ENCODE measurements at regions of chr21 and their contacts with region 1.

Region 1: DNA sequence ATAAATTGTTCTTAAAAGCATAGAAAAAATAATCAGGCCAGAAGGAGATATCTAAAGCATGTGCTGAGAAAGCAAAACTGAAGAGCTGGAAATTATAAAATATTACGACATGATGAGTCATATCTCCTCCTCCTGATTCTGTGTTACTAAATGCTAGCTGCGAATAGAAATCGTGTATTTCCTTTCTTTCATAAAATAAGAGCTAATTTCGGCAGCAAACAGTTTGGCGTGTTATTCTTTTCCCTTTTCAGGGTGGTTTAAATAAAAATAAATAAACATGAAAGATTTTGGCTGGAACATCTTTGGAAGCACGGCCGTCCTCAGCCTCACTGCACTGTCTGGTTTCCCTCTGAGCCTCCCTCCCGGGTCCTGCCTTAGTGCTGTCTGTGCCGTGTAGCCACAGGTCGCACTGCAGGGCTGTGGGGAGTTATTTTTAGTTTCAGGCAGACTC is 56.0 kb downstream of the ADARB1 start:
- DNase-seq: no peak
- ATAC-seq: no peak
- H3K4me3 ChIP-seq: 0 out of 4 replicates have a peak overlapping the region, but pooled peaks of 1 of the 2 experiments have one; percentile 4
- H3K27ac ChIP-seq: no peak overlapping the region
- H3K4me1 ChIP-seq: peaks cover 15 to 19% of the 10 kb centered on the region in 2 experiments
- H3K27me3 ChIP-seq: no peaks in the 10 kb centered on the region
- CTCF ChIP-seq: no peak
- POLR2A ChIP-seq: no peak
- RAD21 ChIP-seq: no peak

Region 2: GRCh38 chr21:44892536-44893277 is 237.6 kb before region 1 on chr21:
- CTCF ChIA-PET with region 1: interaction called, 22 read pairs
- POLR2A ChIA-PET with region 1: no interaction called
- RAD21 ChIA-PET with region 1: no interaction called
- intact Hi-C with region 1: no loop called
- DNase-seq: peak; percentile 26
- ATAC-seq: peak; percentile 89
- H3K4me3 ChIP-seq: no peak overlapping the region
- H3K27ac ChIP-seq: no peak overlapping the region
- H3K4me1 ChIP-seq: no peaks in the 10 kb centered on the region; a peak in 1 of 4 replicates
- H3K27me3 ChIP-seq: no peaks in the 10 kb centered on the region
- CTCF ChIP-seq: peak; percentile 76 to 94 (median 90)
- POLR2A ChIP-seq: no peak
- RAD21 ChIP-seq: peak; percentile 77

Region 3: DNA sequence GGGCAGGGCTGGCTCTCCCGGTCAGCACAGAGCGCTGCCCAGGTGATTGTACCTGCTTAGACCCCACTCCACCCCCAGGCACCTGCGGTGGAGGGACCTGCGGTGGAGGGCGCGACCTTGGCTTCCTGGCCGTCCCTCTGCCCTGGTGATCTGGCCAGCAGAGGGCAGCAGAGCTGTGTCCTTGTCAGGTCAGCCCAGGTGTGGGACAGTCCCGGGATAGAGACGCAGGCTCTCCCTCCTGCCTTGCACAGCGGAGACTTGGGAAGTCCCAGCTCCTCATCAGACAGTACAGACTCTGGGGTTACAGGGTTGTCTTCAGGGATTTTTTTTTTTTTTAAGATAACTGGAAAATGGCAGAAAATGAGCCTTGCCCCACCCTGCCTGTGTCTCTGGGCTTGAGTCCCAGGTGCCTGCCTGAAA is 180.6 kb before region 1 on chr21:
- CTCF ChIA-PET with region 1: interaction called, 42 read pairs
- POLR2A ChIA-PET with region 1: interaction called, 3 read pairs
- RAD21 ChIA-PET with region 1: interaction called, 4 to 8 read pairs
- intact Hi-C with region 1: loop called (anchors 1 kb)
- DNase-seq: peak; percentile 42
- ATAC-seq: peak; percentile 93
- H3K4me3 ChIP-seq: no peak overlapping the region
- H3K27ac ChIP-seq: no peak overlapping the region
- H3K4me1 ChIP-seq: no peaks in the 10 kb centered on the region; a peak in 1 of 4 replicates
- H3K27me3 ChIP-seq: no peaks in the 10 kb centered on the region
- CTCF ChIP-seq: peak; percentile 86 to 90 (median 89)
- POLR2A ChIP-seq: no peak
- RAD21 ChIP-seq: peak; percentile 86

Region 4: GRCh38 chr21:45098867-45099266 is 31.5 kb before region 1 on chr21:
- CTCF ChIA-PET with region 1: interaction called, 19 read pairs
- POLR2A ChIA-PET with region 1: no interaction called
- RAD21 ChIA-PET with region 1: interaction called in 1 of 2 experiments, 3 read pairs
- intact Hi-C with region 1: no loop called
- DNase-seq: no peak
- ATAC-seq: peak; percentile 76
- H3K4me3 ChIP-seq: no peak overlapping the region
- H3K27ac ChIP-seq: no peak overlapping the region
- H3K4me1 ChIP-seq: peaks cover 12 to 15% of the 10 kb centered on the region in 2 experiments
- H3K27me3 ChIP-seq: no peaks in the 10 kb centered on the region
- CTCF ChIP-seq: peak; percentile 11 to 70 (median 64); a peak in 4 of 6 replicates
- POLR2A ChIP-seq: no peak
- RAD21 ChIP-seq: no peak

Measured in HCT116 (cell line).